Heart right ventricle (tissue), 16 donors: ENCODE measurements at regions of chr6 and their contacts with region 1.

Region 1: GRCh38 chr6:22068561-22069305 is 228.1 kb downstream of the PRL start:
- DNase-seq: no peak
- ATAC-seq: no peak
- H3K4me3 ChIP-seq: no peak overlapping the region
- H3K27ac ChIP-seq: peak overlapping the region in 2 of 10 donors; percentile 9 to 81
- H3K4me1 ChIP-seq: peaks cover 10 to 65% (median 45%) of the 10 kb centered on the region in 9 donors
- H3K27me3 ChIP-seq: no peaks in the 10 kb centered on the region
- CTCF ChIP-seq: no peak

Region 2: GRCh38 chr6:21987501-21987957 is 81.2 kb before region 1 on chr6:
- intact Hi-C with region 1: loop called in 1 of 10 experiments (anchors 5 kb)
- DNase-seq: peak; percentile 43 to 87
- ATAC-seq: peak; percentile 79 to 99 (median 99)
- H3K4me3 ChIP-seq: peak overlapping the region in 4 of 10 donors; percentile 14 to 33 (median 30)
- H3K27ac ChIP-seq: peak overlapping the region in 9 of 10 donors; percentile 51 to 86 (median 76)
- H3K4me1 ChIP-seq: peaks cover 0 to 38% (median 22%) of the 10 kb centered on the region in 9 donors
- H3K27me3 ChIP-seq: no peaks in the 10 kb centered on the region
- CTCF ChIP-seq: no peak